ENCODE measurements at regions of chrX and their contacts with region 1.

Region 1: DNA sequence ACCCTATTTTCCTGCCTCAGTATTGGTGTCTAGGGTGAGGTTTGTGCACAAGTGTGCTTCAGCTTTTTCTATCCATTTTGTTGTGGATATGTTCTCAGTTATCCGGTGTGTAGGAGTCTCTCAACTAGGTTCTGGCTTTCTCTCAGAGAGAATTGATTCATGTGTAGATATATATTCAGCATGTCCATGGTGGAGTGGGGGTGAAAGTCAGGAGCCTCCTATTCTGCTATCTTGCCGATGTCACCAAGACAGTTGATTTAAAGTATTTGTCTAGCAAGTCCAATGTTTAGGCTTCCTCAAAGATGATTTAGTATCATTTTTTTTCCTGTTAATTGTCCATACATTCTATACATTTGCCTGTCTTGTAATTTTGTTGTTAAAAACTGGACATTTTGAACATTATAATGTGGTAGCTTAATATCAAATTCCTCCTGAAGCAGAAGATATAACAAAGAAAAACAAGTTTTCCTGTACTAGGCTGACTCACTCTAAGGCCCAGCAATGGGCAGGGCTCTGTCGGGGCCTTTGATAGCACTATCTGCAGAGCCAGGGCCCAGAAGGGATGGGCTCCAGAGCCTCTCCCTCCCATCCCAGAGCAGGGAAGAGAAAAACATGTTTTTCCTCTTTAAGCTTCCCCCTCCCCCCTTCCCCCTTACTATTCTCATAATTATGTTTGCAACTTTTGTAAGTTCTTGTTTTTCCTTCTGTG is 37.6 kb downstream of the GLUD2 start:
- DNase-seq: no peak

Region 2: GRCh38 chrX:121052111-121052510 is 32.9 kb before region 1 on chrX:
- intact Hi-C with region 1: loop called in 1 of 2 experiments (anchors 2 kb)
- DNase-seq: no peak